PC-3 (cell line): ENCODE measurements at regions of chr5 and their contacts with region 1.

Region 1: DNA sequence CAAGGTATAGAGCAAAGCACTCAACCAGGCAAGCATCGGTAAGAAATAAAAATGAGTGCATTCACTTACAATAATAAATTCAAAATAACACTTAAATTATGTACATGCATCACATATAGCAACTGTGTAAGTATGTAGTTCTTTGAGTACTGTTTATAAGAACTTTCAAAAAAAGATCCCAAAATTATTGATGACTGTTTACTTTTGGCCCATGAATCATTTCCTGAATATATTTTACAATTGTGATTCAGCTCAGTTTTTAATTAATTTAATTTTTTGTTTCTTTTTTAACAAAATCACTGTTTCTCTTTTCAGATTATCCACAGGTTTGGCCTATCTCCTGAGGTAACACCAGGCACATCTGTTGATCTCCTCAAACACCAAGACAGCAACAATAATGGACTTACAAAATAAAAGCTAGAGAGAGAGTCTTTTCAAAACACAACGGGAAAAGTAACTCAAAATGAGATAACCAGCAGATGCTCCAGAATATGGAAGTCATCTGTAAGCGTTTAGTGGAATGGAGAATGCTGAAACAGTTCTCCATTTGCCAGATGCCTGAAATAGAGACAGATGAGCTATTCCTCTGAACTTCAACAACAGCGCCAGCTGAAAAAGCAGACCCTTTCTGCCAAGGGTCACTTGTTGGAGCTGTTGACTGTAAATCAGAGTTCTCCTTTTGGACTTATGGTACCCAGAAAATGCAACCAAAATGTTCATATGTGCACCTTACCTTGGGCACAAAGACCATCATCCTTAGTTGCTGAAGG is 348.6 kb upstream of the RGMB start:
- DNase-seq: no peak
- ATAC-seq: no peak
- H3K4me3 ChIP-seq: no peak overlapping the region
- H3K27ac ChIP-seq: no peak overlapping the region
- H3K4me1 ChIP-seq: peaks cover 8% of the 10 kb centered on the region
- H3K27me3 ChIP-seq: no peaks in the 10 kb centered on the region
- CTCF ChIP-seq: no peak

Region 2: DNA sequence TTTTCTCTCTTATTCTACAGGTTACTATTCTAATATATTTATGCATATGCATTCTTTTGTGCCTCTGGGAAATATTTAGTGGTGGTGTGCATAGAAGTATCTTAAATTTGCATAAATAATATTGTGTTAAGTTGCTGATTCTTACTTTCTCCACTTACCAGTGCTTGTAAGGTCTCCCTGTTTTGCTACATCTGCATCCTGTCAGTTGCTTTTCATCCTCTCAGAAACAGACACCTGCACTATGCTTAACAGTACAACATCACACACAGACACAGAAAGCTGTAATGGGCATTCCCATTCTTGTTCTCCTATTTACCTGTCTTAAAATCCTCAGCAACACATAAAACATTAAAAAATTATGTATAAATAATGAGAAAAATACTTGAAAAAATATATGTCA is 364.7 kb before region 1 on chr5:
- CTCF ChIA-PET with region 1: no interaction called
- POLR2A ChIA-PET with region 1: no interaction called
- intact Hi-C with region 1: no loop called
- DNase-seq: no peak
- ATAC-seq: no peak
- H3K4me3 ChIP-seq: no peak overlapping the region
- H3K27ac ChIP-seq: no peak overlapping the region
- H3K4me1 ChIP-seq: peaks cover 3% of the 10 kb centered on the region; the same call in 1 of the 2 replicates
- H3K27me3 ChIP-seq: no peaks in the 10 kb centered on the region
- CTCF ChIP-seq: no peak

Region 3: GRCh38 chr5:98258939-98259338 is 165.9 kb before region 1 on chr5:
- CTCF ChIA-PET with region 1: interaction called, 14 read pairs
- POLR2A ChIA-PET with region 1: no interaction called
- intact Hi-C with region 1: no loop called
- DNase-seq: peak; percentile 66
- ATAC-seq: no peak
- H3K4me3 ChIP-seq: no peak overlapping the region
- H3K27ac ChIP-seq: no peak overlapping the region
- H3K4me1 ChIP-seq: peaks cover 12% of the 10 kb centered on the region; the same call in 1 of the 2 replicates
- H3K27me3 ChIP-seq: no peaks in the 10 kb centered on the region
- CTCF ChIP-seq: no peak

Region 4: DNA sequence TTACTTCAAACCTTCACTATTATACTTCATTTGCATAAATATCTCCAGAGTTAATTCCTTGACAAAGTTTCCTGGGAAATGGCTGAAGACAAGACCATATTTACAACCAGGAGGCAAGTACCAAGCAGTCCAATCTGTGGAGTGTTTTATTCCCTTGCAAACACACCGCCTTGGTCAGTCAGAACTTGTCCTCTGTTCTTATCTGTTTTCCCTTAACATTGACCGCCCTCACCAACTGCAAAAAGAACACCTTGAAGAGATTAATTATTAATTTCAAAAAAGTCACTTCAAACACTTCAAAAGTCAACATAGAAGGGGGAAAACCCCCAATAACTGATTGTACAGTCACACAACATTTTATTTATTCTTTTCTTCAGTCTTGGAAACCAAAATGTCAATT is 79.6 kb after region 1 on chr5:
- CTCF ChIA-PET with region 1: no interaction called
- POLR2A ChIA-PET with region 1: no interaction called
- intact Hi-C with region 1: no loop called
- DNase-seq: no peak
- ATAC-seq: no peak
- H3K4me3 ChIP-seq: no peak overlapping the region
- H3K27ac ChIP-seq: no peak overlapping the region
- H3K4me1 ChIP-seq: no peaks in the 10 kb centered on the region
- H3K27me3 ChIP-seq: no peaks in the 10 kb centered on the region
- CTCF ChIP-seq: no peak